Activated T-helper 1 cell treated with anti-CD3 and anti-CD28 coated beads, Interleukin-12 subunit alpha, Interleukin-12 subunit beta, Interleukin-2, Interleukin-4 antibody, amounts not matched to agents 30 ng/mL and 10 ng/mL and 1 ng/mL, durations not matched to agents 14 hours and 24 hours and 36 hours (primary cell): ENCODE measurements at regions of chr5 and their contacts with region 1.

Region 1: GRCh38 chr5:90529194-90529938 is at the start of gene LYSMD3:
- DNase-seq: peak; percentile 94
- H3K4me3 Mint-ChIP-seq: peak within 1 kb of the TSS; percentile 99
- H3K27ac Mint-ChIP-seq: peak within 1 kb of the TSS; percentile 98
- H3K4me1 Mint-ChIP-seq: peaks cover 42% of the 10 kb centered on the region
- H3K27me3 Mint-ChIP-seq: peaks cover 19% of the 10 kb centered on the region
- total RNA-seq, gene LYSMD3: 12.3 and 13.6 TPM in 2 replicates

Region 2: DNA sequence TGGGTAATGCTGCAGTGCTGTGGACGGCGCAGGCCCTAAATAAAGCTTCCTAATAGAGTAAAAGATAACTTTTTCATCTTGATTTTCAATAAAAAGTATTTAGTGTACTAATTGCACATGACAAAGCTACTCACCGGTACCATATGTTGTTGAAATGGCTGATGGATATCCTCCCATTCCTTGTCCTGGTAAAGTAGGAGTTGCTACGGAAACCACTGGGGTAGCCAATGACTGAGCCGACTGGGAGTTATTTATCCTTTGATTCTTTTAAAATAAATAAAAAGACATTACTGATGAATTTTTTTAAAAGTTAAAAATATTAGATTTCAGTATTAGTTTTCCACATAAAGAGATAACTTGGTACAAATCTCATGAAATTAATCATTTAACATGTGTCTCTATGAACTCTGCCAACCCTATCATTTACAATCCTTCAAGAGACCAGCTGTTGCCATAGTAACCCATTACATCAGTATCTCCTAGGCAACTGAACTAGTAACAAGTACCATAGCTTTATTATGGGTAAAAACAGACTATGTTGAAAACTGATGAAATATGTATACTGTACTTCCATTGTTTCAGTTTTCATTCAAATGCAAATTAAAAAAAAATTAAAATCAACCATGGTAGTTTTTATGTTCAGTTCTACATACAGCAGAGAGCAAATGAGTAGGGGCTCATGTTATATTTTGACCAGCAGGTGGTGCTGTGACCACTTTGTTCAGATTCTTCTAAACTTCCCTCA is 1800.1 kb before region 1 on chr5:
- intact Hi-C with region 1: loop called (anchors 5 kb)
- DNase-seq: peak; percentile 14
- H3K4me3 Mint-ChIP-seq: no peak overlapping the region
- H3K27ac Mint-ChIP-seq: no peak overlapping the region
- H3K4me1 Mint-ChIP-seq: peaks cover 4% of the 10 kb centered on the region
- H3K27me3 Mint-ChIP-seq: peaks cover 9% of the 10 kb centered on the region

Region 3: GRCh38 chr5:90264689-90265544 is 264.4 kb before region 1 on chr5:
- intact Hi-C with region 1: loop called (anchors 10 kb)
- DNase-seq: peak; percentile 6
- H3K4me3 Mint-ChIP-seq: no peak overlapping the region
- H3K27ac Mint-ChIP-seq: no peak overlapping the region
- H3K4me1 Mint-ChIP-seq: no peaks in the 10 kb centered on the region
- H3K27me3 Mint-ChIP-seq: peaks cover 2% of the 10 kb centered on the region

Region 4: GRCh38 chr5:90409318-90410177 is 119.8 kb before region 1 on chr5 and contains the start of gene CETN3:
- intact Hi-C with region 1: loop called (anchors 1 kb)
- DNase-seq: peak; percentile 86
- H3K4me3 Mint-ChIP-seq: no peak within 1 kb of the TSS
- H3K27ac Mint-ChIP-seq: no peak within 1 kb of the TSS
- H3K4me1 Mint-ChIP-seq: peaks cover 21% of the 10 kb centered on the region
- H3K27me3 Mint-ChIP-seq: peaks cover 3% of the 10 kb centered on the region
- total RNA-seq, gene CETN3: 36.2 and 39.8 TPM in 2 replicates

Region 5: GRCh38 chr5:90474235-90475109 is 54.9 kb before region 1 on chr5 and contains the starts of genes MBLAC2 and POLR3G:
- intact Hi-C with region 1: loop called (anchors 1 kb)
- DNase-seq: peak; percentile 87
- H3K4me3 Mint-ChIP-seq: peak within 1 kb of the TSS; percentile 98
- H3K27ac Mint-ChIP-seq: peak within 1 kb of the TSS; percentile 97
- H3K4me1 Mint-ChIP-seq: peaks cover 44% of the 10 kb centered on the region
- H3K27me3 Mint-ChIP-seq: no peaks in the 10 kb centered on the region
- total RNA-seq, gene MBLAC2: 5.0 and 5.7 TPM in 2 replicates
- total RNA-seq, gene POLR3G: 18.4 and 22.1 TPM in 2 replicates